H1 (cell line): ENCODE measurements at regions of chr11 and their contacts with region 1.

Region 1: GRCh38 chr11:43282607-43283440 is 29.0 kb upstream of the API5 start:
- DNase-seq: peak in 1 of 2 experiments; percentile 76
- H3K4me3 ChIP-seq: no peak overlapping the region
- H3K27ac ChIP-seq: no peak overlapping the region
- H3K4me1 ChIP-seq: peaks cover 0 to 5% (median 3%) of the 10 kb centered on the region in 4 experiments; a peak in 4 of 7 replicates
- H3K27me3 ChIP-seq: no peaks in the 10 kb centered on the region
- CTCF ChIP-seq: peak; percentile 67 to 78 (median 75)
- EP300 ChIP-seq: no peak
- POLR2A ChIP-seq: no peak
- RAD21 ChIP-seq: peak; percentile 90 to 91

Region 2: DNA sequence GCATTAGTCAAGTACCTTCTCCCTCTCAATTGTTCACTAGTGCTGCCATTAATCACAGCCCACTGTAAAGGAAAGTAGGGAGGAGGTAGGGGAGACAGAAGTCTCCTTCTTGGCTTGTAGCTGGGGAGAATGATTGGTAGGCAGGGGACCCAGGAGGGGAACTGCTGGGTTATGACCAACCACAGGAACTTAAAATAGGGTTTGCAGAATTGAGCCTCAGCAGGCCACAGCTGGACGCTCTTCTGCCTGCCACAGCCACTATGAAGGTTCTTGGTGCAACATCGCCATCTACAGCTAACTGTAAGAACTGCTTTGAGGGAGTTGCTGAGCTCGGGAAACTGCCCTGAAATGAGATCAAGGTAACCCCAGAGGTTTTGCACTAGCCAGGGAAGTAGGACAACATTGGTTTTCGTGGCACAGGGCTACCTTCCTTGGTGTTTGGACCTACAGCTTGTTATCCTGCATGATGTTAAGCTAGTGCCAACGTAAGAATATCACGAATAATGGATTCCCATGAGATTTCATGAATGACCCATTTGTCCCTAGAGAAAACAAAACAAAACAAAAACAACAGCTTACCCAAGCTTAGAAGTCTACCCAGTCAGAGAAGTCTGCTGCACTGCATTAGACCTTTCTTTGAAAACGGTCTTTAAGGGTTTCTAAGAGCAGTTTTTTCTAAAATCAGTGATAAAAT is 758.1 kb before region 1 on chr11:
- CTCF ChIA-PET with region 1: interaction called, 13 read pairs
- POLR2A ChIA-PET with region 1: no interaction called
- DNase-seq: peak; percentile 59 to 74
- H3K4me3 ChIP-seq: no peak overlapping the region; a peak in 1 of 8 replicates
- H3K27ac ChIP-seq: no peak overlapping the region
- H3K4me1 ChIP-seq: peaks cover 0 to 6% (median 2%) of the 10 kb centered on the region in 4 experiments; a peak in 4 of 7 replicates
- H3K27me3 ChIP-seq: no peaks in the 10 kb centered on the region
- CTCF ChIP-seq: peak; percentile 27 to 87 (median 81)
- EP300 ChIP-seq: no peak
- POLR2A ChIP-seq: no peak
- RAD21 ChIP-seq: peak; percentile 94 to 97

Region 3: DNA sequence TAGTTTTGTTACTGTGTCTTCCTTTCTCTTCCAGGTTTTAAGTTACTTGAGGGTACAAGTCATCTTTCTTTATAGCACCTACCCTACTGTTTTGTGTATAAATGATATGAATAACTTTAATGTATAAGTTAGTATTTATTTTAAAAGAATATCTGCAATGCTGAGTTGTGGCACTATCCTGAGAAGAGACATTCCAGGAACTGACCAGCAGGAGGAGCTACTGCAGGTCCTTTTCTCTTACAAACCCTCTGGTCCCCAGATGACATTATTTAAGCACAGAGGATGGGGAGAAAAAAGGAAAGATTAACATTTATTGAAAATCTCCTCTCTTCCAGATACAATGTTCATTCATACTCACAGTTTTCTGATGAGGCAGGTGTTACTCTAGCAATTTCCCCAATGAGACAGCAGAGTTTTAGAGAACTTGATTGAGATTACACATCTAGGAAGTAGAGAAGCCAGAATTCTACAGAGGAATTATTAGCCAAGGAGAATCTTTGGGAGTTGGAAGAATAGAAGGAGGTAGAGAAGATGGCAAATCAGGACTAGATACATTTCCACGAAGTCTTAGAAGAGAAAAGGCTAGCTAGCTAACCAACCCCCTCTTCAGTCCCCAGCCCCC is 512.3 kb before region 1 on chr11:
- CTCF ChIA-PET with region 1: interaction called, 13 read pairs
- POLR2A ChIA-PET with region 1: interaction called, 3 read pairs
- DNase-seq: peak; percentile 7 to 49
- H3K4me3 ChIP-seq: no peak overlapping the region
- H3K27ac ChIP-seq: no peak overlapping the region
- H3K4me1 ChIP-seq: no peaks in the 10 kb centered on the region
- H3K27me3 ChIP-seq: no peaks in the 10 kb centered on the region; a peak in 1 of 7 replicates
- CTCF ChIP-seq: peak in 2 of 3 experiments; percentile 66 to 67; a peak in 3 of 4 replicates
- EP300 ChIP-seq: no peak
- POLR2A ChIP-seq: no peak
- RAD21 ChIP-seq: peak; percentile 69 to 74

Region 4: GRCh38 chr11:43021466-43021865 is 261.4 kb before region 1 on chr11:
- CTCF ChIA-PET with region 1: interaction called, 17 read pairs
- POLR2A ChIA-PET with region 1: no interaction called
- DNase-seq: no peak
- H3K4me3 ChIP-seq: no peak overlapping the region
- H3K27ac ChIP-seq: no peak overlapping the region
- H3K4me1 ChIP-seq: no peaks in the 10 kb centered on the region
- H3K27me3 ChIP-seq: no peaks in the 10 kb centered on the region
- CTCF ChIP-seq: peak; percentile 5 to 47 (median 41); a peak in 3 of 4 replicates
- EP300 ChIP-seq: no peak
- POLR2A ChIP-seq: no peak
- RAD21 ChIP-seq: peak; percentile 25 to 41; a peak in 2 of 4 replicates

Region 5: DNA sequence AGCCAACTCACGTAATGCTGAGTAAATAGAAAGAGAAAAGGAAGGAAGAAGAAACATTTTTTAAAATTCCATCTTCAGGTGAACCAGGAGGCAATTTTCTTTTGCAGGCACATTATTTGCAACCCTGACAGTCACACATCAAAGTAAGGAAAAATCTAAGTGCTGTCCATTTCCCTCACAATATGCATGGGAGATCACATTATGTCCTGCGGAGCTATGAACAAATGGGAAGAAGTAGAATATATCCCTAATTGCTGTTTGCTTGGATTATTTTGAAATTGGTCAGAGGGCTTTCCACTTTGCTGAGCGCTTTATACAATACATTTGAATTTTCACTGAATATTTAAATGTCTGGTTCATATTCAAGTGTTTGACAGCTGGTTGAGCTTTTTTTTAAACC is 104.8 kb before region 1 on chr11:
- CTCF ChIA-PET with region 1: interaction called, 17 read pairs
- POLR2A ChIA-PET with region 1: no interaction called
- DNase-seq: no peak
- H3K4me3 ChIP-seq: no peak overlapping the region
- H3K27ac ChIP-seq: no peak overlapping the region
- H3K4me1 ChIP-seq: no peaks in the 10 kb centered on the region
- H3K27me3 ChIP-seq: no peaks in the 10 kb centered on the region
- CTCF ChIP-seq: no peak
- EP300 ChIP-seq: no peak
- POLR2A ChIP-seq: no peak
- RAD21 ChIP-seq: no peak

Region 6: DNA sequence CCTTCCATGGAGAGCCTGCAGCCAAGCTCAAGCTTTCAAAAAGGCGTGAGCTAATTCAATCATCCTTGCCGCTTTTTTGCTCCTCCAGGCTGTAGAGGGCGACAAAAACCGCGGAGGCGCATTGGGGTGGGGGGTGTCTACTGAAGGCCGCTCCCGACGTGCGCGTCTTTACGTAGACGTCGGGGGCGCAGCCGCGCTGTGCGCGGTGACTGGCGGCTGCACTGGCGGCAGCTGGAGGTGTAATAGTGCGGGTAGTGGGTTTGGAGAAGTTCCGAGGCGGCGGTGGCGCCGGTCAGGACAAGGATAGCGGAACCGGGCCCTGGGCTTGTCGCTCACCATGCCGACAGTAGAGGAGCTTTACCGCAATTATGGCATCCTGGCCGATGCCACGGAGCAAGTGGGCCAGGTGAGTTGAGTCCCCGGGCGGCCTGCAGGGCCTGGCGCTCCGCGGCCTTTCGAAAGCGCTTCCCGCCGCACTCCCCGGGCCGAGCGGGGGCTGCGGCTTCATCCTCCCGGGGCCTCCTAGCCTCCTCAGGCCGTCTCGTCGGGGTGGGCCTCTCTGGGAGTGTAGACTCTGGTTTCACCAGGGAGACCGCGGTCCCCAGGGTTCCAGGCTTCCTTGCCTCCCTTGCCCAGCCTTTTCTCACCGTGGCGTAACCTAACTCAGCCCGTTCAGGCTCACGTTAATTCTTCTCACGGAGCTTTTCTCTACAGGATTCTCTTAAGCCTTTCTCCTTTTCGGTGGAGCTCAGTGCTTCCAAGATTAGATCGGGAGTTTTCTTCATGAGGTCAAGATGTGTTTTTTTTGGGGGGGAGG is 29.2 kb after region 1 on chr11 and contains the start of gene API5:
- CTCF ChIA-PET with region 1: interaction called, 15 read pairs
- POLR2A ChIA-PET with region 1: no interaction called
- DNase-seq: peak; percentile 90 to 93
- H3K4me3 ChIP-seq: peak within 1 kb of the TSS; percentile 81 to 93 (median 86)
- H3K27ac ChIP-seq: peak within 1 kb of the TSS; percentile 78
- H3K4me1 ChIP-seq: 0 out of 7 replicates have a peak, but pooled peaks cover 0 to 1% (median 0%) of the 10 kb centered on the region in 4 experiments
- H3K27me3 ChIP-seq: no peaks in the 10 kb centered on the region
- CTCF ChIP-seq: peak; percentile 62 to 81 (median 80)
- EP300 ChIP-seq: peak in 1 of 2 experiments; percentile 51; a peak in 1 of 3 replicates
- POLR2A ChIP-seq: peak; percentile 70 to 88
- RAD21 ChIP-seq: peak; percentile 30 to 44; a peak in 3 of 4 replicates
- total RNA-seq, gene API5: 155 and 158 TPM in 2 replicates

Region 7: GRCh38 chr11:43341159-43341558 is 58.3 kb after region 1 on chr11:
- CTCF ChIA-PET with region 1: no interaction called
- POLR2A ChIA-PET with region 1: no interaction called
- DNase-seq: no peak
- H3K4me3 ChIP-seq: no peak overlapping the region
- H3K27ac ChIP-seq: no peak overlapping the region
- H3K4me1 ChIP-seq: no peaks in the 10 kb centered on the region
- H3K27me3 ChIP-seq: no peaks in the 10 kb centered on the region
- CTCF ChIP-seq: no peak
- EP300 ChIP-seq: no peak
- POLR2A ChIP-seq: no peak
- RAD21 ChIP-seq: no peak

Region 8: DNA sequence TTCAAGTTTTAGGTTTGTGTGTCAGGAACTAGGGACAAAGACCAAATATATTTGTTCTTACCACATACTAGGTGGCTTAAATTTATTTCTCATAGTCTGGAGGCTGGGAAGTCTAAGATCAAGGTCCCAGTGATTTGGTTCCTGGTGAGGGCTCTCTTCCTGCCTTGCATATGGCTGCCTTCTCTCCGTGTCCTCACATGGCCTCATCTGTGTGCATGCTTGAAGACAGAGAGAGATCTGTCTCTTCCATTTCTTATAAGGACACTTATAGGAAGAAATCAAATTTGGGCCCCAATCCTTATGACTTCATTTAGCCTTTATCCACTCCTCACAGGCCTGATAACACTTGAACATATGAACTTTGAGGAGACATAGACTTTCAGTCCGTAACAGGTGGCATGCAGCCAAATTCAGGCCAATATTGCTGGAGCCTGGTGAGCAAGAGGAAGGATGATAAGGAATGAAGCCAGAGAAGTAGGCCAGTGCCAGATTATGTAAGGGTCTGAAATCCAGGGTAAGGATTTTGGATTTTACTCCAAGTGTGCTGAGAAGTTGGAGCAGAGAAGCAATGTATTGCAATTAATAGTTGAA is 111.0 kb after region 1 on chr11:
- CTCF ChIA-PET with region 1: no interaction called
- POLR2A ChIA-PET with region 1: no interaction called
- DNase-seq: no peak
- H3K4me3 ChIP-seq: no peak overlapping the region
- H3K27ac ChIP-seq: no peak overlapping the region
- H3K4me1 ChIP-seq: peaks cover 0 to 8% (median 0%) of the 10 kb centered on the region in 4 experiments; a peak in 1 of 7 replicates
- H3K27me3 ChIP-seq: no peaks in the 10 kb centered on the region
- CTCF ChIP-seq: no peak
- EP300 ChIP-seq: no peak
- POLR2A ChIP-seq: no peak
- RAD21 ChIP-seq: no peak